ENCODE measurements at regions of chr18 and their contacts with region 1.

Region 1: DNA sequence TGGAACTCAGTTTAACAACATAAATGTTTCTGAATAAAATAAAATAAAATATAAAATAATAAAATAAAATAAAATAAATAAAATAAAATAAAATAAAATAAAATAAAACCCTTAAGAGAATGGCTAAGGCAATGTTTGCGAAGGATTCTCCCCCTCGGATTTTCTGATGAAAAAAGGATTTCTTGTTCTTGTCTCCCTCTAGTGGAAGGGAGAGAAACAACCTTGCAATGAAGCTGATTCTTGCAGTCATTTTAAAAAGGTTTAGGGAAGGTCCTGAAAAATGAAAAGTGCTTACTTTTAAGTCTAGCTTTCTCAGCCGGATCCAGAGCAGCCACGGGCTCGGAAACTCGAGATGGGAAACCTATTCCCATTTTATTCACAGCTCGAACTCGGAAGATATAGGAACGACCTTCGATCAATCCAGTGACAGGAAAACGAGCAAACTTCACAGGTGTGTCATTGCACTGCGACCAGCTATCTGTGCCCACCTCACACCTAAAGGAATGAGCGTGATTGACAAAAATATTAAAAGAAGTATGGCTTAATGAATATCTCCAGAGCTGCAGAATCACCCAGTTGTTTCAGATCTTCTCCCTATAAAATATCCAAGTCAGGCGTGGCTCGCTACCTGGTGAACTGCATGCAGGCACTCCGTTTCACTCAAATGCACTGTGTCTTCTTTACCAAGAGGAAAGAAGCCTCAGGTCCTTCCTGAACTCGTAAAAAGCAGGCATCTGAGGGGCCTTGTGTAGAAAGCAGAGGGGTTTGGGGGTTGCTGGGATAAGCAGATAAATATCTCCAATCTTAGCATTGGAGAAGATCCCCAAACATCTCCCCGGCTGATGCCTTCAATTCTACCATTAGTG is 68.1 kb downstream of the MYOM1 start:
- DNase-seq: no peak
- H3K4me3 ChIP-seq: no peak overlapping the region
- H3K27ac ChIP-seq: no peak overlapping the region
- H3K4me1 ChIP-seq: peaks cover 0 to 10% (median 0%) of the 10 kb centered on the region in 3 donors
- H3K27me3 ChIP-seq: no peaks in the 10 kb centered on the region
- CTCF ChIP-seq: peak; percentile 43 to 73 (median 63)
- POLR2A ChIP-seq: no peak

Region 2: DNA sequence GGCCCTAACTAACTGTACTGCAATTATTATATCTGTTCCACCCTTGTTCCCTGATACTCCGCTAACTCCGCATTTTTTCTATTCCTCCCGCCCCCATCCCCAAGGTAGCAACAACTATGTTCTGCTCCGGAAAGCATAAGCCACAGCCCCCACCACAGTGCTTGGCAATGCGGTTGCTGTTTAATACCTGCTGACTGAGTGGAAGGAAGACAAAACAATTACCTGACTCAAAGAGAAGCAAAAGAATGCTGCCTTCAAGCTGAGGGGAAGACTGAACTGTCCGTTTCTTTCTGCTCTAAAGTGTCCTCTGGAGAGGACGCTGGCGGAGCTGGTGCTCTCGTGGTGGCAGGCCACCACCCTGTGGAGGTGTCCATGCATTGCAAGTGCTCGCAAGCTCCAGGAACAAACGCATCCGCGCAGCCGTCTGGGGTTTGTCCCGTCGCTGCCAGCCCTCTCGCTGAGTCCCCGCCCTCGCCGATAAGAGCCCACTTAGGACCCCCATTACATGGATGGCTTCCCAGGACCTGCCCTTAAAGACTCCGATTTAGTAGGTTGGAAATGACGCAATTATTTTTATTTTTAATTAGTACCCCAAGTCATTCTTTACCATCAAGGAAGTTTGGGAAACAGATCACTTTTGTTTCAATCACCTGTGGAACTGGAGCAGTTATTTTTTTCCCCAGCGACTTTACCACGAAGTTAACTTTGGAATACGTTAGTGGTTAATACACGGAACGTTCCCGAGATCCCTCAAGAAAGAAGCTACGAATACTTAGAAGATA is 94.4 kb after region 1 on chr18:
- intact Hi-C with region 1: loop called (anchors 10 kb)
- DNase-seq: peak; percentile 42
- H3K4me3 ChIP-seq: peak overlapping the region; percentile 82 to 100 (median 95)
- H3K27ac ChIP-seq: peak overlapping the region; percentile 99 to 100 (median 100)
- H3K4me1 ChIP-seq: peaks cover 5 to 51% (median 24%) of the 10 kb centered on the region in 3 donors
- H3K27me3 ChIP-seq: no peaks in the 10 kb centered on the region
- CTCF ChIP-seq: peak; percentile 81 to 98 (median 94)
- POLR2A ChIP-seq: peak in 1 of 4 donors; percentile 13

Measured in esophagus squamous epithelium (tissue), 5 donors.